CD4-positive, alpha-beta T cell (primary cell): ENCODE measurements at regions of chr17 and their contacts with region 1.

Region 1: DNA sequence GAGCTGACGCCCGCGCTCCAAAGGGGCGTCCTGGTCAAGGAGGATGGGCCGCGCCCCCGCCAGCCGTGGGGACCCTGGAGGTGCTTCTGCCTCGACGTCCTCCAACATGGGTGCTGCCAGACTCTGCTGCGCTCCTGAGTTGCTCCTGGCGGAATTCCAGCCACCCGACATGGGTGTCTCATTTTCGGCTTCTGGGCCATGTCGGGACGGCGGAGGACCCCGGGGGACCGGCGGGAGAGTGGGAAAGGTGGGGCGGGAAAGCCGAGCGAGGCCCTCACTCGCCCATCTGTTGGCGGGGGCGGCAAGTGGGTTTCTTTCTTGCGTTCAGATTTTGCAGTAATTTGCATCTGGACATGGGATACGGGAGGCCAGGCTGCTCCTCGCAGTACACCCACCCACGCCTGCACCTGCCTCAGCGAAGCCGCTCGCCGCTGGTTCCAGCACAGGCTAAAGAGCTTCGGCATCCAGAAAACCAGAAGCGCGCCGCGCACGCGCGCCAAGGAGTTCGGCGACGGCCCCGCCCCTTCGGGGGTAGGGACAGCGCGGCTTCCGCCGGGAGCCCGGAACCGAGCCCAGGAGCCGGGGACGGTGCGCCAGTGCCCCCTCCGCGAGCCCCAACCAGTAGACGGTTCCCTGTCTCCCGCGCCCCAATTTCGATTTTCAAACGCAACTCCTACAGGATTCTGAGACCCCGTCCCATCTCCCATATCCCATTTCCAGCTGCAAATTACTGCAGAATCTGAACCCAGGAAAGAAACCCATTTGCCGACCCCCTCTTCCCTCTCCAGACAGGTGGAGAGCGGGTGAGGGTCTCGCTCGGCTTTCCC is at the start of gene ARMC7:
- DNase-seq: peak; percentile 84 to 97 (median 90)
- ATAC-seq: peak; percentile 80
- H3K4me3 ChIP-seq: peak within 1 kb of the TSS; percentile 89
- H3K4me3 Mint-ChIP-seq: peak within 1 kb of the TSS; percentile 92
- H3K27ac ChIP-seq: peak within 1 kb of the TSS; percentile 29 to 59
- H3K27ac Mint-ChIP-seq: peak within 1 kb of the TSS; percentile 82
- H3K4me1 ChIP-seq: peaks cover 44% of the 10 kb centered on the region
- H3K4me1 Mint-ChIP-seq: peaks cover 32% of the 10 kb centered on the region
- H3K27me3 ChIP-seq: no peaks in the 10 kb centered on the region
- H3K27me3 Mint-ChIP-seq: no peaks in the 10 kb centered on the region
- CTCF ChIP-seq: no peak
- total RNA-seq, gene ARMC7: 4.1 to 4.8 TPM

Region 2: DNA sequence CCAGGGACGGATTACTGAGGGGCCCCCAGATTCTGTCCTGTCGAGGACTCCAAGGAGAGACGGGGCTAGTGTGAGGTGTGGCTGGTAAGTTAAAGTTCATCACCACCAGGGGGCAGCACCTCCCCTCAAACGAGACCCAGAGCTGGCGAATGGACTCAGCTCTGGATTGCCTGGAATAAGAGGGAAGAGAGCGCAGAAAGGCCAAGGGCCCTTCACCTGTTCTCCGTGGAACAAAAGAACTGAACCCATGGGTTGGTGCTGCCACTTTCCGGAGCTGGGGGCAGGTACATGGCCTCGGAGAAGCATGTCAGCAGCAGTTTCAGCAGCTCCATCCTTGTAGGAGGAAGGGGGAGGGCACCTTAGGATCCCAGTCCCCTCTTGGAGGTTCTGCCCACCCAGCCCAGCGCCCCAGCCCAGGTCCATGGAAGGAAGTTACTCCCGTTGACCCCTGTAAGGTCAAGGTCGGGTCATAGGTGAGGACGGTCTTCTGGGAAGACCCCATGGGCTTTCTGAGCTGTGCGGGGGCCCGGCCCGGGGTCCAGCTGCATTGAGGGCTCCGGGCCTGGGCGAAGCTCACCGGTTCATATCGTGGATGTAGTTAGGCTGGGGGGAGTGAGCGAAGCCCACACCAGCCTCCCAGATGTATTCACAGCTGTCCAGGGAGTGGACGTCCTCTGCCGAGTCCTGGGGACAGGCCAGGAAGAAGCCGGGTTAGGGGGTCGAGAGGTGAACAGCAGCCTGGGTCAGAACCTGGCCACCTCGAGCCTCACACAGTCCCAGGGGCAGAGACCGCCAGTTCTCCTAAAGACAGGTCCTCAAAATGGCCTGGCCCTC is 147.7 kb before region 1 on chr17:
- CTCF ChIA-PET with region 1: interaction called, 5 read pairs
- POLR2A ChIA-PET with region 1: interaction called, 7 read pairs
- intact Hi-C with region 1: loop called in 1 of 2 experiments (anchors 1 kb)
- DNase-seq: peak; percentile 74 to 93 (median 82)
- ATAC-seq: peak; percentile 79
- H3K4me3 ChIP-seq: no peak overlapping the region
- H3K4me3 Mint-ChIP-seq: peak overlapping the region; percentile 14
- H3K27ac ChIP-seq: no peak overlapping the region
- H3K27ac Mint-ChIP-seq: no peak overlapping the region
- H3K4me1 ChIP-seq: peaks cover 17% of the 10 kb centered on the region
- H3K4me1 Mint-ChIP-seq: peaks cover 4% of the 10 kb centered on the region
- H3K27me3 ChIP-seq: no peaks in the 10 kb centered on the region
- H3K27me3 Mint-ChIP-seq: no peaks in the 10 kb centered on the region
- CTCF ChIP-seq: peak; percentile 83

Region 3: GRCh38 chr17:75069783-75070182 is 39.8 kb before region 1 on chr17:
- CTCF ChIA-PET with region 1: interaction called, 6 read pairs
- POLR2A ChIA-PET with region 1: interaction called, 11 read pairs
- intact Hi-C with region 1: loop called (anchors 5 to 10 kb)
- DNase-seq: peak in 3 of 14 experiments; percentile 19 to 42 (median 36)
- ATAC-seq: no peak
- H3K4me3 ChIP-seq: no peak overlapping the region
- H3K4me3 Mint-ChIP-seq: peak overlapping the region; percentile 50
- H3K27ac ChIP-seq: no peak overlapping the region
- H3K27ac Mint-ChIP-seq: peak overlapping the region; percentile 50
- H3K4me1 ChIP-seq: peaks cover 31% of the 10 kb centered on the region
- H3K4me1 Mint-ChIP-seq: peaks cover 30% of the 10 kb centered on the region
- H3K27me3 ChIP-seq: no peaks in the 10 kb centered on the region
- H3K27me3 Mint-ChIP-seq: no peaks in the 10 kb centered on the region
- CTCF ChIP-seq: peak; percentile 23

Region 4: DNA sequence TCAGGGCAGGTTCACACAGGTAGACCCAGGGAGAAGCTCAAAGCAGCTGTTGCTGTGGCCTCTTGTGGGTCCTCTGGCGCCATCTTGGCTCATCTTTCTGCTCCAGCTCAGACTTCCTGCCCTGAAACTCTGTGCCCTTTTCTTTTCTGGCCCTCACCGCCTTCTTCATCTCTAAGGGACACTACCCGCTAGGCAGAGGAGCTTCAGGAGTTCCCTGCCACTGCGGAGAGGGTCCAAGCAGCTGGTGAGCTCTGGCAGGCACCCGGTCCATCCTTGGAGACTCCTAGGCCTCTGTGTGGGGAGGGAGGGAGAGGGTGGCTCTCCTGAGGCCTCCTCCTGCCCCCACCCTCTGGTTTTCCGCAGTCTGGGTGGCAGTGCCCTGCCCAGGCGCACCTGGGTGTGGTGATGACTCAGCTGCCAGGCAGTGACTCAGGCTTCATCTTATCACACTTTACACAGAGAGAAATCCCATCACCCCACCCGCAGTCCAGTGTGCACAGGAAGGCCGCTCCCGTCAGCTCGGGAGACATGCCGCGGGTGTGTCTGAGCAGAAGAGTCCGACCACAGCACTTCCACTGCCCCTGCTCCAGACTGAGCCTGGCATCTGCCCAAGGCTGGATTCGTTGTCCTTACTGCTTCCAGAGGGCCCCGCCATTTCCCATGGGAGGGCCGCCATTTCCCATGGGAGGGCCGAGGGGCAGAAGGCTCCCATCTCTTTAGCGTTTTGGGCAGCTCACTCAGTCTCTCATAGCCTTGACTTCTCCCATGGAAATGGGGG is 14.6 kb after region 1 on chr17:
- CTCF ChIA-PET with region 1: interaction called, 97 read pairs
- POLR2A ChIA-PET with region 1: interaction called, 10 read pairs
- intact Hi-C with region 1: no loop called
- DNase-seq: peak in 13 of 14 experiments; percentile 32 to 80 (median 59)
- ATAC-seq: peak; percentile 85
- H3K4me3 ChIP-seq: no peak overlapping the region
- H3K4me3 Mint-ChIP-seq: peak overlapping the region; percentile 34
- H3K27ac ChIP-seq: peak overlapping the region in 1 of 2 donors; percentile 29
- H3K27ac Mint-ChIP-seq: peak overlapping the region; percentile 84
- H3K4me1 ChIP-seq: peaks cover 29% of the 10 kb centered on the region
- H3K4me1 Mint-ChIP-seq: peaks cover 29% of the 10 kb centered on the region
- H3K27me3 ChIP-seq: no peaks in the 10 kb centered on the region
- H3K27me3 Mint-ChIP-seq: no peaks in the 10 kb centered on the region
- CTCF ChIP-seq: no peak

Region 5: GRCh38 chr17:75173526-75173925 is 63.9 kb after region 1 on chr17:
- CTCF ChIA-PET with region 1: interaction called, 66 read pairs
- POLR2A ChIA-PET with region 1: interaction called, 37 read pairs
- intact Hi-C with region 1: loop called (anchors 1 kb)
- DNase-seq: no peak
- ATAC-seq: no peak
- H3K4me3 ChIP-seq: no peak overlapping the region
- H3K4me3 Mint-ChIP-seq: no peak overlapping the region
- H3K27ac ChIP-seq: no peak overlapping the region
- H3K27ac Mint-ChIP-seq: no peak overlapping the region
- H3K4me1 ChIP-seq: peaks cover 20% of the 10 kb centered on the region
- H3K4me1 Mint-ChIP-seq: peaks cover 19% of the 10 kb centered on the region
- H3K27me3 ChIP-seq: no peaks in the 10 kb centered on the region
- H3K27me3 Mint-ChIP-seq: no peaks in the 10 kb centered on the region
- CTCF ChIP-seq: no peak

Region 6: GRCh38 chr17:75205037-75205792 is 95.6 kb after region 1 on chr17 and contains the start of gene NUP85:
- CTCF ChIA-PET with region 1: interaction called, 102 read pairs
- POLR2A ChIA-PET with region 1: interaction called, 28 read pairs
- intact Hi-C with region 1: loop called (anchors 1 kb)
- DNase-seq: peak; percentile 87 to 95 (median 90)
- ATAC-seq: peak; percentile 89
- H3K4me3 ChIP-seq: peak within 1 kb of the TSS; percentile 95
- H3K4me3 Mint-ChIP-seq: peak within 1 kb of the TSS; percentile 96
- H3K27ac ChIP-seq: peak within 1 kb of the TSS; percentile 91 to 94
- H3K27ac Mint-ChIP-seq: peak within 1 kb of the TSS; percentile 95
- H3K4me1 ChIP-seq: peaks cover 28% of the 10 kb centered on the region
- H3K4me1 Mint-ChIP-seq: peaks cover 27% of the 10 kb centered on the region
- H3K27me3 ChIP-seq: no peaks in the 10 kb centered on the region
- H3K27me3 Mint-ChIP-seq: no peaks in the 10 kb centered on the region
- CTCF ChIP-seq: no peak
- total RNA-seq, gene NUP85: 84.7 to 89.2 TPM

Region 7: GRCh38 chr17:75271233-75271954 is 161.8 kb after region 1 on chr17:
- CTCF ChIA-PET with region 1: interaction called, 12 read pairs
- POLR2A ChIA-PET with region 1: interaction called, 10 read pairs
- intact Hi-C with region 1: no loop called
- DNase-seq: peak; percentile 70 to 96 (median 86)
- ATAC-seq: peak; percentile 90
- H3K4me3 ChIP-seq: peak overlapping the region; percentile 95
- H3K4me3 Mint-ChIP-seq: peak overlapping the region; percentile 84
- H3K27ac ChIP-seq: peak overlapping the region; percentile 78 to 85
- H3K27ac Mint-ChIP-seq: peak overlapping the region; percentile 48
- H3K4me1 ChIP-seq: peaks cover 40% of the 10 kb centered on the region
- H3K4me1 Mint-ChIP-seq: peaks cover 21% of the 10 kb centered on the region
- H3K27me3 ChIP-seq: no peaks in the 10 kb centered on the region
- H3K27me3 Mint-ChIP-seq: no peaks in the 10 kb centered on the region
- CTCF ChIP-seq: peak; percentile 54